OCI-LY7 (cell line): ENCODE measurements at regions of chr6 and their contacts with region 1.

Region 1: DNA sequence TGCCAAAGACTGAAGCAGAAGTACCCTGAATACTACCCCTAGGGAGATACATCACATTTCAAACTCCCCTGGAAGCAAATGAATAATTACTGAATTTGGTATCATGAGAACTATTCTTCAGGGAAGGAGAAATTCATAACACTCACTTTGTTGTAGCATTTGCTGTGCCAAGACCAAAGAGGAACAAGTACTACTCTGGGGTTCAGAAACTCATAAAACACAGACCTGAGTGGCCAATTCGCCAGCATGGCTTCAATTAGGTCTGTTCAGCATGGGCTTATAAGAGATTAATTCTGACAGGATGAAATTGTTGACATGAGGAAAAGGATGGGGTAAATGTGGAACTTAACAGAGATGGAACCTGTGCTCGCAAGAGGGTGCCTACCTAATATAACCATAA is 6.5 kb downstream of the ELOVL5 start:
- DNase-seq: no peak
- H3K4me3 ChIP-seq: no peak overlapping the region
- H3K27ac ChIP-seq: no peak overlapping the region
- H3K4me1 ChIP-seq: peaks cover 89% of the 10 kb centered on the region
- CTCF ChIP-seq: no peak

Region 2: GRCh38 chr6:53327017-53327395 is 15.2 kb before region 1 on chr6:
- CTCF ChIA-PET with region 1: interaction called, 3 read pairs
- POLR2A ChIA-PET with region 1: interaction called, 22 read pairs
- intact Hi-C with region 1: no loop called
- DNase-seq: no peak
- H3K4me3 ChIP-seq: no peak overlapping the region
- H3K27ac ChIP-seq: no peak overlapping the region
- H3K4me1 ChIP-seq: peaks cover 50% of the 10 kb centered on the region
- CTCF ChIP-seq: no peak

Region 3: GRCh38 chr6:53359072-53359842 is 17.0 kb after region 1 on chr6:
- CTCF ChIA-PET with region 1: interaction called, 3 read pairs
- POLR2A ChIA-PET with region 1: interaction called, 10 read pairs
- intact Hi-C with region 1: no loop called
- DNase-seq: peak; percentile 91
- H3K4me3 ChIP-seq: peak overlapping the region; percentile 71
- H3K27ac ChIP-seq: peak overlapping the region; percentile 76
- H3K4me1 ChIP-seq: peaks cover 37% of the 10 kb centered on the region
- CTCF ChIP-seq: no peak